Heart right ventricle (tissue), 16 donors: ENCODE measurements at regions of chr6 and their contacts with region 1.

Region 1: DNA sequence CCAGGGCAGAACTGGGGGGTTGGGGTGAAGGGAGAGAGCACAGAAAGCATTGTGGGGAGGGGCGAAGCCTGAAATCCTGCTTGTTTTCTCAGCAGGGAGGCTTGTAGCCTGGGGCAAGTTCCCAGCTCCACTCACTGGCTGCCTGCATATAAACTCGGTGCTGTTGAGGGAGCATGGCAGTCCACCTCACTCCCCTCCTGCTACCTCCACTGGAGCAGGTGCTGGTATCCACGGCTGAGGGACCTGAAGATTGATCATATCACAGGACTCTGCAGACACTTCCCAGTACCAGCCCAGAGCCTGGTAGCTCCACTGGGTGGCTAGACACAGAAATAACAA is 65.5 kb upstream of the HCRTR2 start:
- DNase-seq: no peak
- ATAC-seq: no peak
- H3K4me3 ChIP-seq: no peak overlapping the region
- H3K27ac ChIP-seq: no peak overlapping the region
- H3K4me1 ChIP-seq: no peaks in the 10 kb centered on the region
- H3K27me3 ChIP-seq: peaks cover 0 to 8% (median 0%) of the 10 kb centered on the region in 7 donors
- CTCF ChIP-seq: no peak

Region 2: GRCh38 chr6:54992789-54993188 is 116.0 kb before region 1 on chr6:
- intact Hi-C with region 1: no loop called
- DNase-seq: no peak
- ATAC-seq: no peak
- H3K4me3 ChIP-seq: no peak overlapping the region
- H3K27ac ChIP-seq: no peak overlapping the region
- H3K4me1 ChIP-seq: no peaks in the 10 kb centered on the region
- H3K27me3 ChIP-seq: no peaks in the 10 kb centered on the region
- CTCF ChIP-seq: no peak

Region 3: DNA sequence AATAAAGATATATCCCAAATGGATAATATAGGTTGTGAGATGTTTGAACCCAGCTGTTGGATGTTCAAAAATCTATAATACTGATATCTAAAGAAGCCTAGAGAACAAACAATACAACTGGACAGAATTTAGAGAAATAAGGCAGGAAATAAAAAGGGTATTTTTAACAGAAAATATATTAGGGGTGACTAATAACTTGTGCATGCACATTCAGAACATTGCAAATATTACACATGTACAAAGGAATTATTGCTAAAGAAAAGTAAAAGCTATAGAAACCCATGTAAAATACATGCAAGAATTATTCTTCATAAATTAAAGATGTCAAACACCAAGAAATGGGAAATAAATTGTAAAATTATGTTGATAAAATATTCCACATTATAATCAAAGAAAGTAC is 32.8 kb after region 1 on chr6:
- intact Hi-C with region 1: loop called in 1 of 10 experiments (anchors 5 kb)
- DNase-seq: no peak
- ATAC-seq: no peak
- H3K4me3 ChIP-seq: no peak overlapping the region
- H3K27ac ChIP-seq: no peak overlapping the region
- H3K4me1 ChIP-seq: no peaks in the 10 kb centered on the region
- H3K27me3 ChIP-seq: no peaks in the 10 kb centered on the region
- CTCF ChIP-seq: no peak

Region 4: DNA sequence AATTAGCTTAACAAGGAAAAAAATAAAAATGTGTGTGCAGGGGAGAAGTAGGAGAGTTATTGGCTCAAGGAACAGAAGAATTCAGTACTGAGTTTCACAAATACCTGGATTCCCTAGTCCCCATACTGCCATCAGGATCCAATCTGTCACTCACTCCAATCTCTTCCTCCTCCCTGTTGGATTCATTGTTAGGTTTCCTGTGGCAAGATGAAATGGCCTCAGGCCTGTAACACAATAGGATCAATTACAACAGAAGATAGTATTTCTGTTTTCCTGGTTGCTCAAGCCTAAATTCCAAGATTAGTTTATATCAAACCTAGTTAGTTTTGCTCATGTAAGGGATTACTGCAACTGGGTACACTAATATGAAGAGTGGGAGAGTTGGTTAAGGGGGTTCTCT is 89.9 kb after region 1 on chr6:
- intact Hi-C with region 1: no loop called
- DNase-seq: no peak
- ATAC-seq: no peak
- H3K4me3 ChIP-seq: no peak overlapping the region
- H3K27ac ChIP-seq: no peak overlapping the region
- H3K4me1 ChIP-seq: no peaks in the 10 kb centered on the region
- H3K27me3 ChIP-seq: no peaks in the 10 kb centered on the region
- CTCF ChIP-seq: no peak